ENCODE measurements at regions of chr14 and their contacts with region 1.

Region 1: DNA sequence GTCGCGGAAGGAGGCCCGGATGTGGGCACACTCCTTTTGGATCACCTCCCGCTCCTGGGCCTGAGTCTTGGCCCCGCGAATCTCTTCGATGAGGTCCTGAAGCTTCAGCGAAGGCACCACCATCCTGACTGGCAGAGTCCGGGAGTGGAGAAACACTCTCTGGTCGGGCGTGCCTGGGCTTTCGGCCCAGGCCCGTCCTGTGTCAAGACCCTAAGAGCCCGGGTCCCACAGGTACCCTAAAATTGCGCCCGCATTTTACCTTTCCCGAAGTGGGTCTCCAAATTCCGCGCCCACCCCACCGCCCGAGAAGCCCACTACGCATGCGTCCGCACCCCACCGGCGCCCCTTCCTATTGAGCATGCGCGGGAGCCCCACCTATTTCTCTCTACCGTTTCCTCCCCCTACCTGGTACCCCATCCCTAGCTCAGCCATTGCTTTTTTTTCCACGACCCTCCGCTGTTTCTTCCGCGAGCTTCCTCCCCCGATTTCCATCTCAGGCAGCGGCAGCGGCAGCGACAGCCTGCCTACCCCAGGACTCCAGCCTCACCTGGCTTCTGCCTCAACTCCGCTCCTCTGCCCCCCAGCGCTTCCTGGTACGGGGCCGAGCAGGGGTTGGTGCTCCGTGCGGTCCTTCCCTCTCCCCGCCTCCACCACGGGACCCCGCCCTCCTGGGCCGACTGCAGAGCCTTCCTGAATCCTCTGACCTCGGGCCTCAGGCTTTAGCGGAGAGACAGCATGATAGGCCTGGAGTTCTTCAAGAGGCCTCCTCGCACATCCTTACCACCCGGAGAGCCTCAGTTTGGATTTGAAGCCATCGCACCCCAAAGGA is at the start of gene AP1G2:
- DNase-seq: peak; percentile 91
- H3K4me3 Mint-ChIP-seq: peak within 1 kb of the TSS; percentile 100
- H3K27ac Mint-ChIP-seq: peak within 1 kb of the TSS; percentile 96
- H3K4me1 Mint-ChIP-seq: peaks cover 50% of the 10 kb centered on the region
- H3K27me3 Mint-ChIP-seq: no peaks in the 10 kb centered on the region
- total RNA-seq, gene AP1G2: 263 to 275 TPM

Region 2: GRCh38 chr14:23316300-23316699 is 251.1 kb before region 1 on chr14:
- CTCF ChIA-PET with region 1: no interaction called
- POLR2A ChIA-PET with region 1: no interaction called
- DNase-seq: no peak
- H3K4me3 Mint-ChIP-seq: no peak overlapping the region
- H3K27ac Mint-ChIP-seq: no peak overlapping the region
- H3K4me1 Mint-ChIP-seq: peaks cover 13% of the 10 kb centered on the region
- H3K27me3 Mint-ChIP-seq: no peaks in the 10 kb centered on the region

Region 3: GRCh38 chr14:23478111-23478759 is 89.2 kb before region 1 on chr14:
- CTCF ChIA-PET with region 1: interaction called, 148 read pairs
- POLR2A ChIA-PET with region 1: interaction called, 6 read pairs
- DNase-seq: peak; percentile 71
- H3K4me3 Mint-ChIP-seq: no peak overlapping the region
- H3K27ac Mint-ChIP-seq: no peak overlapping the region
- H3K4me1 Mint-ChIP-seq: peaks cover 2% of the 10 kb centered on the region
- H3K27me3 Mint-ChIP-seq: no peaks in the 10 kb centered on the region

Region 4: DNA sequence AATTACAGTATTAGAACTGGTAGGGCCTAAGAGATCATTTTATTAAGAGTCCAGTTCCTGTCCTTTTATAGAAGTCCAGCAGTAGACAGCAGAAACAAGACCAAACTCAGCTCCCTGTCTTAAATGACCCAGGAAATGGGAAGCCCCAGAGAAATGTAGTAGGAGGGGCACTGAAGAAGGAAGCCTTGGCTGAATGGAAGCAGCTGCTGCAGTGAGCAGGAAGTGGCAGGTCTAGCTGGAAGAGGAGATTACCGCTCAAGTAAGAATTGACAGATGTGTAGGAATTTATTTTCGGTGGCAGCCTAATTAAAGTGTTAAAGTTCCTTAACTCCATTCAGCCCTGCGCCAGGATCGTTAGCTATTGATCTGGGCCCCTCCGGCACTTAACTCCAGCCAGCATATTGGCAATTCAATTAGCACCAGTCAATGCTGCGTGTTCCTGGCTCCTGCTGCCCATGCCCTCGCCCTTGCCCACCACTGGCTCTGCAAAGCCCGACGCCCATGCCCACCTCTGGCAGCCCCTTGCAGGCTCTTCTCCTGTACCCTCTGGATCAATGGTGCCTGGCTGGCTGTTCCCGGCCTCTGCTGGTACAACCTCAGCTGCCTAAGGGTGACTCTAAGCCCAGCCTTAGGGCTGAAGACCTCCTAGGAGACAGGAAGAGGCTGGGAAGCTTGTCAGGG is 36.9 kb before region 1 on chr14:
- CTCF ChIA-PET with region 1: no interaction called
- POLR2A ChIA-PET with region 1: no interaction called
- DNase-seq: no peak
- H3K4me3 Mint-ChIP-seq: no peak overlapping the region
- H3K27ac Mint-ChIP-seq: no peak overlapping the region
- H3K4me1 Mint-ChIP-seq: no peaks in the 10 kb centered on the region
- H3K27me3 Mint-ChIP-seq: no peaks in the 10 kb centered on the region

Region 5: GRCh38 chr14:23555882-23556699 is 11.3 kb before region 1 on chr14 and contains the start of gene THTPA:
- CTCF ChIA-PET with region 1: interaction called, 18 read pairs
- POLR2A ChIA-PET with region 1: interaction called, 16 read pairs
- DNase-seq: peak; percentile 95
- H3K4me3 Mint-ChIP-seq: peak within 1 kb of the TSS; percentile 97
- H3K27ac Mint-ChIP-seq: peak within 1 kb of the TSS; percentile 90
- H3K4me1 Mint-ChIP-seq: peaks cover 43% of the 10 kb centered on the region
- H3K27me3 Mint-ChIP-seq: no peaks in the 10 kb centered on the region
- total RNA-seq, gene THTPA: 11.6 to 11.8 TPM

Region 6: DNA sequence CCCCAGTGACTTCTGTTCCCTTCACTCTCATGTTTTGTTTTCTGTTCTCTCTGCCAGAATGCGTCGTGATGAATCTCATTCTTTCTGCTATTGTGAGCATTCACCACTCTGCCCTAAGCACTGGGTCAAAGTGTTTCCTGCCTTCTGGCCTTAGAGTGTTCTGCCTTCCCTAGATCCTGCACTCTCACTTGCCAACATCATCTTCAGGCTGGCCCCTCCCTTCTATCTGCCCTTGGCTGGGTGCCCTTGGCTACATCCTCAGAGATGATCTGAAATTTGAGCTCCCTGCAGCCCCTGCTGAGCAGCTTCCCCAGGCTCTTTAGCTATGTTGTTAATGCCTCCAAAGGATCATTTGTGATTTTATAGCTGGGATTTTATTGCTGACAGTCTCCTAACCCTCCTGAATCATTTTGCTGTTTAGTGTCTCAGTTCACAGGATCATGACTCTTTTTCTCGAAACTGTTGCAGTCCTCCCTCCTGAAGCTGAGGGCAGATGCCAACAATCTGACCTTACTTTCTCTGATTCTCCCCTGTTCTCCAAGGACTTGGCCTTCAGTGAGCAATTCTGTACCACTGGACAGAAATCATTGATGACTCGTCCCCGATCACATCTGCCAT is 73.2 kb after region 1 on chr14:
- CTCF ChIA-PET with region 1: no interaction called
- POLR2A ChIA-PET with region 1: no interaction called
- DNase-seq: no peak
- H3K4me3 Mint-ChIP-seq: no peak overlapping the region
- H3K27ac Mint-ChIP-seq: no peak overlapping the region
- H3K4me1 Mint-ChIP-seq: peaks cover 8% of the 10 kb centered on the region
- H3K27me3 Mint-ChIP-seq: no peaks in the 10 kb centered on the region

Measured in activated CD4-positive, alpha-beta memory T cell treated with anti-CD3 and anti-CD28 coated beads, Interleukin-2, amount 10 ng/mL, durations not matched to agents 7 days and 5 days (primary cell).